Activated B cell treated with CpG ODN at 0.5 μM for 24 hours (primary cell): ENCODE measurements at regions of chr5 and their contacts with region 1.

Region 1: DNA sequence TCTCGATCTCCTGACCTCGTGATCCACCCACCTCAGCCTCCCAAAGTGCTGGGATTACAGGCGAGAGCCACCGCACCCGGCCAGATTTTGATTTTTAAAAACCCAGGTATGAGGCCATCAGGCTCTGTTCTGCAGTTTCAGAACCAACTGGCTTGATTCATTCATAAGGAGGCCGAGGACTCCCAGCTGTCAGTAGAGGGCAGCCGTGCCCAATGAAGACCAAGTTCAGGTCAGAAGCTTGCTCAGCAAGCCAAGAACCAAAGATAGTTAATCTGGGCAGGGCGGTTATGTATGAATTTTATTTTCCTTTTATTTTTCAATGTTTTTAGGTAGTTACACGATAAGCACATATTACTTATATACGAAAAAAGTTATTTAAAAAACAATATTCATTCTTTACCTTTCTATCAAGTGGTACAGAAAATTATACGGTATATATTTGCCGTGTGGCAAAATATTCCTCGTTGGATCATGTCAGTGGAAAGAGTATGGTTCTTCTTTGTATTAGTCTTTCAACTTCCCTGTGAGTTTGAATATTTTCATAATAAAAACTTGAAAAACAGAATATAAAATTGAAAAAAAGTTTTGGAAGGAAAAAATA is 18.0 kb downstream of the MGAT1 start:
- DNase-seq: peak; percentile 58
- ATAC-seq: peak; percentile 89
- H3K4me3 Mint-ChIP-seq: no peak overlapping the region
- H3K27ac Mint-ChIP-seq: no peak overlapping the region
- H3K4me1 Mint-ChIP-seq: no peaks in the 10 kb centered on the region
- H3K27me3 Mint-ChIP-seq: no peaks in the 10 kb centered on the region
- CTCF ChIP-seq: peak; percentile 36

Region 2: GRCh38 chr5:179967489-179967888 is 817.1 kb before region 1 on chr5:
- CTCF ChIA-PET with region 1: no interaction called
- POLR2A ChIA-PET with region 1: no interaction called
- intact Hi-C with region 1: no loop called
- DNase-seq: no peak
- ATAC-seq: no peak
- H3K4me3 Mint-ChIP-seq: no peak overlapping the region
- H3K27ac Mint-ChIP-seq: peak overlapping the region; percentile 69
- H3K4me1 Mint-ChIP-seq: peaks cover 44% of the 10 kb centered on the region
- H3K27me3 Mint-ChIP-seq: no peaks in the 10 kb centered on the region
- CTCF ChIP-seq: no peak

Region 3: DNA sequence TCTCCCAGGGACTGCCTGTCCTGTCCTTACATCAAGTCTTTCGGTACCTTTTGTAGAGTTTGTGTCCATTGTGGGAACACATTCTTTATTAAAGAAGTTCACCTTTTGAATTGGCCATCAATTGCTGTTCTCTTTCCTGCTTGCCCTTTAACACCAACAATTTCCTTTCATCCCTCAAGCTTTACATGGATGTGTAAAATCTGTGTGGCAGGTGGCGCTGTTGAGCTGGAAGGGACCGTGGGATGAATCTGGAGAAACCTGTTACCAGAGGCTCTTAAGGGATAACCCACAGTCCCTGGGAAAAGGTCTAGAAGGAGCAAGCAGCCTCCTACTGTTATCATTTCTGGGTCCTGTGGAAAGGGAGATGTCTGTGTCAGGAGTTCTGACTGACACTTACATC is 84.4 kb after region 1 on chr5:
- CTCF ChIA-PET with region 1: interaction called, 22 read pairs
- POLR2A ChIA-PET with region 1: no interaction called
- intact Hi-C with region 1: loop called (anchors 1 kb)
- DNase-seq: peak; percentile 45
- ATAC-seq: peak; percentile 54
- H3K4me3 Mint-ChIP-seq: no peak overlapping the region
- H3K27ac Mint-ChIP-seq: no peak overlapping the region
- H3K4me1 Mint-ChIP-seq: peaks cover 13% of the 10 kb centered on the region
- H3K27me3 Mint-ChIP-seq: peaks cover 3% of the 10 kb centered on the region
- CTCF ChIP-seq: peak; percentile 20

Region 4: GRCh38 chr5:181088289-181088688 is 303.7 kb after region 1 on chr5:
- CTCF ChIA-PET with region 1: interaction called, 3 read pairs
- POLR2A ChIA-PET with region 1: no interaction called
- intact Hi-C with region 1: loop called (anchors 5 kb)
- DNase-seq: no peak
- ATAC-seq: no peak
- H3K4me3 Mint-ChIP-seq: no peak overlapping the region
- H3K27ac Mint-ChIP-seq: no peak overlapping the region
- H3K4me1 Mint-ChIP-seq: no peaks in the 10 kb centered on the region
- H3K27me3 Mint-ChIP-seq: peaks cover 10% of the 10 kb centered on the region
- CTCF ChIP-seq: no peak

Region 5: GRCh38 chr5:181181650-181182565 is 397.3 kb after region 1 on chr5:
- CTCF ChIA-PET with region 1: interaction called, 5 read pairs
- POLR2A ChIA-PET with region 1: no interaction called
- intact Hi-C with region 1: loop called (anchors 1 kb)
- DNase-seq: no peak
- ATAC-seq: peak; percentile 70
- H3K4me3 Mint-ChIP-seq: no peak overlapping the region
- H3K27ac Mint-ChIP-seq: no peak overlapping the region
- H3K4me1 Mint-ChIP-seq: peaks cover 31% of the 10 kb centered on the region
- H3K27me3 Mint-ChIP-seq: no peaks in the 10 kb centered on the region
- CTCF ChIP-seq: peak; percentile 41